Activated T-helper 2 cell treated with anti-CD3 and anti-CD28 coated beads, Interferon-gamma antibody, Interleukin-2, Interleukin-4, amounts not matched to agents 10 μg/mL and 5 μg/mL and 100 μg/mL, durations not matched to agents 14 hours and 24 hours and 36 hours (primary cell): ENCODE measurements at regions of chr4 and their contacts with region 1.

Region 1: DNA sequence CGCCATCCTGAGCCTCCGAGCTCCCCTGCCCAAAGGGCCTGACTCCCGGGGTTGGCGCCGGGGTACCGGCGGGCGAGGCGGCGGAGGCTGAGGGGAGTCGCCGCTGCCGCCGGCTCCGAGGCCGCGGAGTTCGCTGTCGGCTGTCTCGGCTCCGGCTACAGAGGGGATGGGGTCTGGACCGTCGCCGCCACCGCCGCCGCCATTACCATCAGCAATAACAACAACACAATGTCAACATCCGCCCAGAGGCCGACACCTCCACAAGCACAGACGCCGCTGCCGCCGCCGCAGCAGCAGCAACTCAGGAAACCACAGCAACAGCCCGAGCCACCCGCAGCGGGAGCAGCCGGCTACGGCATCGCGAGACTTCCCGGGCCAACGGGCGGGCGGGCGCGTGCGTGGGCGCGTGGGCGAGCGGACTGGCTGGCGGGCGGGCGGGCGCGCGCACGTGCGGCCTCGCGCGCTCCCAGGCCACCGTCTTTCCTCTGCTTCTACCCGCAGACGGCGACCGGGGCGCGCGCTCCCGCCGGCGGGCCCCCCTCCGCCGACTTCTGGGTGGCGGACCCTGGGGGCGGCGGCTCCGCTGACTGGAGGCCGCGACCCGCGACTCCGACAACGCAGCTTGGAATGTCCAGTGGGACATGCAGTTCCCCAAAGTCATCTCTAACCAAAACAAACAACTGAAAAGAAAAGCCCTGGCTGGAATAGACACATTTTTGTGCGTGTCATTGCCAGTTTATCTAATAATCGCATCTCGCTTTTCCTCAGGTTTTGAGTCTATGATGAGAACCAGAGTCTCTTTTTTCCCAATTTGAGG is at the start of gene CHIC2:
- DNase-seq: peak; percentile 96
- H3K4me3 Mint-ChIP-seq: peak within 1 kb of the TSS; percentile 92
- H3K27ac Mint-ChIP-seq: peak within 1 kb of the TSS; percentile 87
- H3K4me1 Mint-ChIP-seq: peaks cover 48% of the 10 kb centered on the region
- H3K27me3 Mint-ChIP-seq: peaks cover 3% of the 10 kb centered on the region
- total RNA-seq, gene CHIC2: 18.8 and 22.5 TPM in 2 replicates

Region 2: GRCh38 chr4:53365486-53366300 is 698.8 kb before region 1 on chr4 and contains the start of gene SCFD2:
- intact Hi-C with region 1: loop called (anchors 5 kb)
- DNase-seq: peak; percentile 94
- H3K4me3 Mint-ChIP-seq: peak within 1 kb of the TSS; percentile 95
- H3K27ac Mint-ChIP-seq: peak within 1 kb of the TSS; percentile 94
- H3K4me1 Mint-ChIP-seq: peaks cover 37% of the 10 kb centered on the region
- H3K27me3 Mint-ChIP-seq: peaks cover 17% of the 10 kb centered on the region
- total RNA-seq, gene SCFD2: 26.3 and 31.7 TPM in 2 replicates

Region 3: DNA sequence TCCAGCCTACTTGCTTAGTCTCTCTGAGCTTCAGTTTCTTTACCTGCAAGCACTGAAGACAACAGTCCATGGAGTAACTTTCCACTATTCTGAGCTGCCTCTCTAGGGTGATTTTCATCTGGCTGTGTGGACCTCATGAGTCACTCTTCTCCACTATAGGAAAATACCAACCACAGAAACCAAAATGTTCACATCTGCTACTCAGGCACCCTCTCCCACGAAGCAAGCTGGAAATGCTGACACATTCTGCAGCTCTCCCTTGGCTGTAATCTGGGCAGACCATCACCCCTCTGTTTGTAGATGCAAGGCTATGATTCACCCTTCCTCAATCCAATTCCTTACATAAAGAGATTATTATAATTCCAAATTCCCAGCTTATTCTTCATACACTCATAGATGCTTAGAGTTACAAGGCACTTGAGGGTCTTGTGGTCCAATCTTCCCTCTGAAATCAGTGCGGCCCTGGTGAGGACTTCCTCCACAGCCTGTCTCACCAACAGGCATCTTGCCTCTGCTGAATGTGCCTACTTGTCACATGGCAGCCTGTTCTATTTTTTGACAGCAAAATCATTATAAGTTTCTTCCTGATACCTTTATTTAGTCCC is 376.2 kb before region 1 on chr4:
- intact Hi-C with region 1: loop called (anchors 5 kb)
- DNase-seq: no peak
- H3K4me3 Mint-ChIP-seq: no peak overlapping the region
- H3K27ac Mint-ChIP-seq: peak overlapping the region; percentile 43
- H3K4me1 Mint-ChIP-seq: peaks cover 10% of the 10 kb centered on the region
- H3K27me3 Mint-ChIP-seq: peaks cover 8% of the 10 kb centered on the region

Region 4: DNA sequence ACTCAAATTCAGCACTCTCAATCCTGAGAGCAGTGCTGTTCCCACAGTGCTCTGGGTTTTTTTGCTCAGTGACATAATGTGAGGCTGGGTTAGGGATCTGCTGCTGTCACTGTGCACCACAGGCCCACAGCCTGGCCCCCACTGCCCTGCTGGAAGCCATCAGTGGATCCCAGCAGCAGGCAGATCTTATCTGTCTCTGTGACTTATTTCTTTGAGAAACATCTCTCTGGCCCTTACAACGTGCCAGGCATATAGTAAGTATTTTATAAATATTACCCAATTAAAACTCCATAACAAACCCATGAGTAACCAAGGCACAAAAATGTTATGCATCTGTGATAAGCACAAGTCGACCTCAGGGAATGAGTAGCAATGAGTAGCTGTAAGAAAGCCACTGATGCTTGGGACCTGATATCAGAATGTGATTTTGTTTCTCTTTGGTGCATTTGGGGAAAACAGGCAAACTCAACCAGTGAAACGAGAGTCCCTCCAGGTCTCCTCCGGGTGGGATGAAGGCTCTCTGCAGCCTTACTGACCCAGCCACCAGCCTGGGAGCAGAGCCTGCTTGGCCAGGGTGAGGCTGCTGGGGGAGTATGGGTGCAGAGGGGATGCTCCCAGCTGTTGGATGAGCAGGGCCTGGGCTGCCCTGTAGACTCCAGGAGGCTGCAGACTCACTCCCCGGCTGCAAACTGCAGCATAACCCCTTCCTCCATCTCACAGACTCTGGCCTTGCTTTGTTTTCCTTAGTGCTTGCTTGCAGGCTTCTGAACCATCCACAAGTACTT is 300.5 kb before region 1 on chr4:
- intact Hi-C with region 1: no loop called
- DNase-seq: no peak
- H3K4me3 Mint-ChIP-seq: no peak overlapping the region
- H3K27ac Mint-ChIP-seq: no peak overlapping the region
- H3K4me1 Mint-ChIP-seq: no peaks in the 10 kb centered on the region
- H3K27me3 Mint-ChIP-seq: no peaks in the 10 kb centered on the region

Region 5: DNA sequence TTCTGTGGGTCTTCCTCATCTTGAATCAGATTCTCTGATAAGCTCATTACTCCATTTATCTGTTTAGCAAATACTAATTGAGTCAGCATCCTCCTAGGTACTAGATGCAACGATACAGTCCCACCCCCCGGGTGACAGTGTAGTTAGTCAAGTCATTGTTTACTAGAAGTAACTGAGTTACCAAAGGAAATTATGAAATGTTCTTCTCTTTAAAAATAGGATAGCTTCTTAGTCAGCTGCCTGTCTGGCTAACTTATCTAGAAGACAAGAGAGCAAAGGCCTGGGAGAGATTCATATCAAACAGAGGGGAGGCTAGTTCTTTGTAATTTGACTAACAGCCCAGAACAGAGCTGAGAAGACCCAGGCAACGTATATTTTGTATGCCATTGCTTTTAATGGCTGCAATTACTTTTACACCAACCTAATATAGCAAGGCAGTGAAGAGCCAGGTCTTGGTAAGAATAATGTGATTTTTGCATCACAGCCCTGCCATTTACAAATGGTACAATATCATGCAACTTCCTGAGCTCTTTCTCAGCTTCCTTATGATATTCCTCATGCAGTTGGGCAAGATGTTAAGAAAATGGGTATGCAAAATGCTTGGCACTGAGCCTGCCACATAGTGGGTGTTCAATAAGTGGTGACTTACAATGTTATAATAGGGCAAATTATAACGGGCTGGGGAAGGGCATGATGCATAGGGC is 150.0 kb before region 1 on chr4:
- intact Hi-C with region 1: no loop called
- DNase-seq: no peak
- H3K4me3 Mint-ChIP-seq: no peak overlapping the region
- H3K27ac Mint-ChIP-seq: no peak overlapping the region
- H3K4me1 Mint-ChIP-seq: peaks cover 12% of the 10 kb centered on the region
- H3K27me3 Mint-ChIP-seq: peaks cover 12% of the 10 kb centered on the region

Region 6: DNA sequence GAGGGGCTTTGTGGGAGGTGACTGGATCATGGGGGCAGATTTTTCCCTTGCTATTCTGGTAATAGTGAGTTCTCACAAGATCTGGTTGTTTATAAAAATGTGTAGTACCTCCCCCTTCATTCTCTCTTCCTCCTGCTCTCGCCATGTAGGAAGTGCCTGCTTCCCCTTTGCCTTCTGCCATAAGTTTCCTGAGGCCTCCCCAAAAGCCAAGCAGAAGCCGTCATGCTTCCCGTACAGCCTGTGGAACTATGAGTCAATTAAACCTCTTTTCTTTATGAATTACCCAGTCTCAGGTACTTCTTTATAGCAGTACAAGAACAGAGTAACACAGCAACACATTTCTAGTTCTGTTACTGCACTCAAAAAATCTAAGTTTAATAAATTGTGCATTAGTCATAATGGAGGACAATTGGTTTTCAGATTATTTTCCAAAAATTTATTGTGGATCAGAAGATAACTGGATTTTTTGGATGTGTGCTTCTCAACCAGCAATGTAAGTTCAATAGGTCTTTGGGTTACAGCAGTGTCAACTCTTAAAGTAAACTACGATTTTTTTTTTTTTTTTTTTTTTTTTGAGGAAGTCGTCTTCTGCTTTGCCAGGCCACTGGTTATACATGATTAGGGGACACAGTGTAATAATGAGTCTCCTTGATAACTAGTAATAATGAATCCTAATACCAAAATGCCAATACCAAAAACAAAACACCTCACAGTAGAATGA is 70.0 kb before region 1 on chr4:
- intact Hi-C with region 1: loop called (anchors 5 kb)
- DNase-seq: no peak
- H3K4me3 Mint-ChIP-seq: no peak overlapping the region
- H3K27ac Mint-ChIP-seq: no peak overlapping the region
- H3K4me1 Mint-ChIP-seq: no peaks in the 10 kb centered on the region
- H3K27me3 Mint-ChIP-seq: no peaks in the 10 kb centered on the region

Region 7: DNA sequence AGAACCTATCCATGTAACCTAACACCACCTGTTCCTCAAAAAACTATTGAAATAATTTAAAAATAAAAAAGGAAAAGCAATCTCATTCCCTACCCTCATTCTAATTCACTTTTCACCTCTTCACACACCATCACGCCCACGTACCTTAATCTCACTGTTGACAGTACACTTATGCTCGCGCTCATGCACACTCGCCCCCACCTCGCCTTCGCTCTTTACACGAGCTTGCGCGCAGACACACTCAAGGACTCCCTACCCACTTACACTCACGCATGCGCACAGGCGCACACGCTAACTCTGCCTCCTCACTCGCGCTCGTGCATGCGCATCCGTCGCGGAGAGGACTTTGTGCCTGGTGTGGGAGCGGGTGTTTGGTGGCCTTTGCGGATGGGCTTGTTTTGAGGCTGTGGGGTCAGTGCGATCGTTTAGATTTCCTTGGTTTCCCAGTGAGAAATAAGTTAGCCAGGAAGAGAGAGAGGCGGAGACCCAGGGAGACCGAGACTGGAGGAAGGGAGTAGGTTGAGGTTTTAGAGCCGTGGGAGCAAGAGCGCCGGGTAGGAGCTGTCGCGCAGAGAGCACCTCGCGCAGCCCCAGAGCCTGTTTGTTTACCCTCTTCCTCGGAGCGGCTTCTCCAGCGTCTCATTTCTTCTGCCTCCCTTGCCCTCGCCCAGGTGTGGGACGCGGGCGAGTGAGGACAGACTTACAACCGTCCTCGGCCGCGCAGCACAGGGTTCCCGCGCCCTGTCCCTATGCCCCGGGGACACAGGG is 27.3 kb after region 1 on chr4:
- intact Hi-C with region 1: loop called (anchors 1 kb)
- DNase-seq: peak; percentile 58
- H3K4me3 Mint-ChIP-seq: peak overlapping the region; percentile 85
- H3K27ac Mint-ChIP-seq: peak overlapping the region; percentile 32
- H3K4me1 Mint-ChIP-seq: peaks cover 20% of the 10 kb centered on the region
- H3K27me3 Mint-ChIP-seq: peaks cover 81% of the 10 kb centered on the region